ENCODE measurements at regions of chr5 and their contacts with region 1.

Region 1: DNA sequence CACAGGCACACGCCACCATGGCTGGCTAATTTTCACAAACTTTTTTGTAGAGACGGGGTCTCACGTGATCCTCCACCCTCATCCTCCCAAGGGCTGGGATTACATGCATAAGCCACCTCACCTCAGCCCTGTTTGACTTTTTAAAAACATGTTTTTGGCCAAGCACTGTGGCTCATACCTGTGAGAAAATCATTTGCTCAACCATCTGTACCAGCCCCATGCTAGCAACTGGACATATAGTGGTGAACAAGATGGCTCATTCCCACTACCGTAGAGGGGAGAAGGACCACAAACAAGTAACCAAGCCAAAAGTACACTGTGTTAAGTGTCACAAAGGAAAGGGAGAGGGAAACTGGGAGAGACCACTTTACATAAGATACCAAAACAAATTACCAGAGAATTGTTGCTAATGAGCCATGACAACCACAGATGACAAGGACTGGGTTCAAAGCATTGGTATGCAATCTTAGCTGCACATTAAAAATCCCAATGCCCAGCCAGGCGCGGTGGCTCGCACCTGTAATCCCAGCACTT is 19.2 kb downstream of the PPP2CA start:
- DNase-seq: no peak
- ATAC-seq: no peak
- H3K4me3 Mint-ChIP-seq: no peak overlapping the region
- H3K27ac Mint-ChIP-seq: no peak overlapping the region
- H3K4me1 Mint-ChIP-seq: peaks cover 27% of the 10 kb centered on the region
- H3K27me3 Mint-ChIP-seq: no peaks in the 10 kb centered on the region

Region 2: DNA sequence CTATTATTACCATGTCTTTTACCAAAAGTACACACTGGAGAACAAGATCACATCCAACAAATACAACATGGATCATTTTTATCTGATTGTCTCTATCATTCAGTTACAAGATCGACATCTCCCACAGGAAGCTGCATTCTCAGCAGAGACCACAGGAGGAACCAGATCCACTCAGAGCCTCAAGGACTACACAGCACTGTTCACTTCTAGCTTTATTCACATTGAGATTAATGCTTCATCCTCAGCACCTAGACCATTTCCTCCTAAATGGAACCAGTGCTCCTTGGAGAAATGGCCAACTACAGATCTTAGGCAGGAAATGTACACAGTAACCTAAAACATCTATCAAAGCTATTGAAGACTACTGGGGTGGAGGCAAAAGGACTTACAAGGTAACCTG is 225.0 kb before region 1 on chr5:
- CTCF ChIA-PET with region 1: no interaction called
- POLR2A ChIA-PET with region 1: no interaction called
- intact Hi-C with region 1: no loop called
- DNase-seq: no peak
- ATAC-seq: peak; percentile 37
- H3K4me3 Mint-ChIP-seq: no peak overlapping the region
- H3K27ac Mint-ChIP-seq: peak overlapping the region; percentile 52
- H3K4me1 Mint-ChIP-seq: peaks cover 26% of the 10 kb centered on the region
- H3K27me3 Mint-ChIP-seq: no peaks in the 10 kb centered on the region

Region 3: DNA sequence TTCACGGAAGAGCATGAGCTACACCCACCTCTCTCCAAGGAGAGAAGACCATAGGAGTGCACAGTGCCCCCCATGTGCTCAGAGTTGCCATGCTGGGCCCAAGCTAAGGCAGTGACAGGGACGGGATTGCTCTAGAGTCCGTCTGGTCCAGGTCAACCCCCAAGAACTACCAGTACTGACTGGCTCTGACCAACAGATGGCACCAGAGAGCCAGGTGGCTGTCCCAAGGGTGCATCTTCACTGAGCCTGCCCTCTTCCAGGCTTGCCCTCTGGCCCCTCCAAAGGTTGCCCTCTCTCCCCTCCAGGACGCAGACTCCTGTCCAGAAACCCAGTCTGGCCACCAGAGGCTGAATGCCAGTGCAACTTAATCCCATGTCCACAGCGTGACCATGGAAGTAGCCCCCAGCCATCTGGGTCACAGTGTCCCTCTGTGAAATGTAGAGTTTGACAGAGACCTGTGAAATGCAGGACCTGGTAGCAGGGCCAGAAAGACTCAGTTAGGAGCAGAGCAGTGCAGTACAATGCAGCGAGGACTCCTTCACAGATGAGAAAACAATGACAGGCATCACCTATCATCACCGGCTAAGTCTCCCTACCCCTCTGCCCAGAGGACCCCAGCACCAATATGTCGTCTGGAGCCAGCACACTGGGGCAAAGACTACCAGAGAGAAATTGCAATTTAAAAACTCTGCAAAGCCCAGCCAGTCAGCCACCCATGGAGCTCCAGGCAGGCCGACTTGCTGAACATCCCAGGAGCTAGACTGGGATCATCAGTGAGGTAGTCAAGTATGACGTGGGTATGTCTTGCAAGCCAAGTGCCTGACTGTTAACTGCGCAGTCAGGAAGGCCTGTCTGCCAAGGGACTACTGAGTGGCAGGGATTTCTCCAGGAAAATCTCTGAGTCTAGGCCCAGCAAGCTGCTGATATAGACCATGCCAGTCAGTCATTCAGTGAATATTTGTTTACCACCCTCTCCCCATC is 22.2 kb before region 1 on chr5:
- CTCF ChIA-PET with region 1: interaction called, 17 read pairs
- POLR2A ChIA-PET with region 1: no interaction called
- intact Hi-C with region 1: no loop called
- DNase-seq: peak; percentile 88
- ATAC-seq: peak; percentile 99
- H3K4me3 Mint-ChIP-seq: no peak overlapping the region
- H3K27ac Mint-ChIP-seq: no peak overlapping the region
- H3K4me1 Mint-ChIP-seq: no peaks in the 10 kb centered on the region
- H3K27me3 Mint-ChIP-seq: no peaks in the 10 kb centered on the region